ENCODE measurements at regions of chr22 and their contacts with region 1.

Region 1: GRCh38 chr22:45309472-45310227 is at the start of gene FAM118A:
- DNase-seq: peak; percentile 98
- ATAC-seq: peak; percentile 86
- H3K4me3 Mint-ChIP-seq: peak within 1 kb of the TSS; percentile 80
- H3K27ac Mint-ChIP-seq: peak within 1 kb of the TSS; percentile 97
- H3K4me1 Mint-ChIP-seq: peaks cover 46% of the 10 kb centered on the region
- H3K27me3 Mint-ChIP-seq: no peaks in the 10 kb centered on the region
- total RNA-seq, gene FAM118A: 25.5 to 29.0 TPM

Region 2: DNA sequence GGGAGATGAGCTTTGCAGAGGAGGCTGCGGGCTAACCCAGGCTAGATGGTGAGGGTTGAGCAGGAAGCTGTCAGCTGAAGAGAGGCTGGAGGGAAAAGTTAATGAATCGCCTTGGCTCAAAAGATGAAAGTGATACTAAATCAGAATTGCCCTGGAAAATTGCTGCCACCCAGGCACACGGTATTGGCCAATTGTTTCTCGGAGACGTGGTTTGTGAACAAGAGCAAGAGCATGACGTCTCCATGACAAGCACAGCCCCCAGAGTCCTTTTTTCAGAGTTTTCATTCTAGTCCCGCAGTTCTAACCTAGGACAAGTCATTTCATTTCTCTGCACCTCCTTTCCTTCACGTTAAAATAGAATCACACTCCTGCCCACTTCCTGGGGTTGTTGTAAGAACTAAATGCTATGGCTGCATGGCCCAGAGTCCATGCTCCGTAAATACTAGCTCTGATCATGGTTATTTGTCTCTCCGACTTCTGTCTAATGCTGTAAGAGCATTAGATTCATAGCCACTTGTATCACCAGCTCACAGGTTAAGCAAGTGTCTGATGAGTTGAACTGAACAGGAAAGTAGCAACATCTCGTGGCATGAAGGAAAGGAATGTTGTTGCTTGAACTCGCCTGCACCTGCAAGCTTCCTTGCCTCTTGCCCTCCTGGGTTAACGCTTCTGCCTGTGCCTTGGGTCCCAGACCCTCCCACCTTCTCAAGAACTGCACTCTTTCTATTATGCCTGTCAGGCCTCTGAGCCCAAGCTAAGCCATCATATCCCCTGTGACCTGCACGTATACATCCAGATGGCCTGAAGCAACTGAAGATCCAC is 179.7 kb before region 1 on chr22:
- CTCF ChIA-PET with region 1: no interaction called
- POLR2A ChIA-PET with region 1: interaction called, 3 read pairs
- intact Hi-C with region 1: loop called in 1 of 2 experiments (anchors 1 kb)
- DNase-seq: peak; percentile 75
- ATAC-seq: peak; percentile 93
- H3K4me3 Mint-ChIP-seq: peak overlapping the region; percentile 11
- H3K27ac Mint-ChIP-seq: peak overlapping the region; percentile 89
- H3K4me1 Mint-ChIP-seq: peaks cover 28% of the 10 kb centered on the region
- H3K27me3 Mint-ChIP-seq: no peaks in the 10 kb centered on the region

Region 3: DNA sequence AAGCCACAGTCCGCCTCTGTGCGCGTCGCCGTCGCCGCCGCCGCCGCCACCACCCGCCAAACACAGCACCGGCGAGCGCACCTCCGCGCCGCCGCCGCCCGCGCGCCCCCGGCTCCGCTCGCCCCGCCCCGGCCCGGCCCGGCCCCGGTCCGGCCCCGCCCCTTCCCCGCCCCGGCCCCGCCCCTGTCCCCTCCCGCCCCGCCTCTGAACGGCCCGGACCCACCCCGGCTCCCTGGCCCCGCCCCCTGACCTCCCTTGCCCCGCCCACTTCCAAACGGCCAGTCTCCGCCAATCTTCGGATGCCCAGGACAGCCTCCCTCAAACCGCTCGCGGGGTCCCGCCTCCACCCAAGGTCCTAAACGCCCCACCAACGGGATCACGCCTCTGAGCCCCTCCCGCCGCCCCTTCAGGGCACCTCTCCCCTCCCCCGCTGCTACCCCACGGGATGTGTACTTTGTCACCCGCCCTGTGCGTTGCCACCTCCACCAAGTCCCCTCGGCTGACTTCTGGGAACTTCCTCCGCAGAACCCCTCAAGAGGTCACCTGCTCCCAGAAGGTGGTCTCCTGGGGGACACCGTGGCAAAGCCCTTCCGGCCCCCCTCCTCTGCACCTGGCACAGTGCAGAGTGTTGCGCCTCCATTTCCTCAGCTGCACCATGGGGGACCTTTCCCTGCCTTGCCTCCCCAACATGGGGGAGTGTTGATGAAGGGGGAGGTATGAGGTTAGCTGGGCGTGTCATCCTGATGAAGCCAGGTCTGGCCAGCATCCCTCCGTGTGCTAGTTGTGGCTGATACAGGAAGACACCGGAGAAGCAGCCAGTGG is 68.6 kb before region 1 on chr22 and contains the start of gene KIAA0930:
- CTCF ChIA-PET with region 1: no interaction called
- POLR2A ChIA-PET with region 1: no interaction called
- intact Hi-C with region 1: loop called in 1 of 2 experiments (anchors 1 kb)
- DNase-seq: peak; percentile 91
- ATAC-seq: peak; percentile 69
- H3K4me3 Mint-ChIP-seq: peak within 1 kb of the TSS; percentile 89
- H3K27ac Mint-ChIP-seq: peak within 1 kb of the TSS; percentile 78
- H3K4me1 Mint-ChIP-seq: peaks cover 10% of the 10 kb centered on the region
- H3K27me3 Mint-ChIP-seq: no peaks in the 10 kb centered on the region
- total RNA-seq, gene KIAA0930: 24.8 to 29.6 TPM

Region 4: GRCh38 chr22:45284705-45285262 is 24.9 kb before region 1 on chr22 and contains the start of gene UPK3A:
- CTCF ChIA-PET with region 1: no interaction called
- POLR2A ChIA-PET with region 1: no interaction called
- intact Hi-C with region 1: loop called in 1 of 2 experiments (anchors 1 kb)
- DNase-seq: peak; percentile 80
- ATAC-seq: peak; percentile 97
- H3K4me3 Mint-ChIP-seq: no peak within 1 kb of the TSS
- H3K27ac Mint-ChIP-seq: no peak within 1 kb of the TSS
- H3K4me1 Mint-ChIP-seq: peaks cover 20% of the 10 kb centered on the region
- H3K27me3 Mint-ChIP-seq: peaks cover 8% of the 10 kb centered on the region
- total RNA-seq, gene UPK3A: not detected

Region 5: DNA sequence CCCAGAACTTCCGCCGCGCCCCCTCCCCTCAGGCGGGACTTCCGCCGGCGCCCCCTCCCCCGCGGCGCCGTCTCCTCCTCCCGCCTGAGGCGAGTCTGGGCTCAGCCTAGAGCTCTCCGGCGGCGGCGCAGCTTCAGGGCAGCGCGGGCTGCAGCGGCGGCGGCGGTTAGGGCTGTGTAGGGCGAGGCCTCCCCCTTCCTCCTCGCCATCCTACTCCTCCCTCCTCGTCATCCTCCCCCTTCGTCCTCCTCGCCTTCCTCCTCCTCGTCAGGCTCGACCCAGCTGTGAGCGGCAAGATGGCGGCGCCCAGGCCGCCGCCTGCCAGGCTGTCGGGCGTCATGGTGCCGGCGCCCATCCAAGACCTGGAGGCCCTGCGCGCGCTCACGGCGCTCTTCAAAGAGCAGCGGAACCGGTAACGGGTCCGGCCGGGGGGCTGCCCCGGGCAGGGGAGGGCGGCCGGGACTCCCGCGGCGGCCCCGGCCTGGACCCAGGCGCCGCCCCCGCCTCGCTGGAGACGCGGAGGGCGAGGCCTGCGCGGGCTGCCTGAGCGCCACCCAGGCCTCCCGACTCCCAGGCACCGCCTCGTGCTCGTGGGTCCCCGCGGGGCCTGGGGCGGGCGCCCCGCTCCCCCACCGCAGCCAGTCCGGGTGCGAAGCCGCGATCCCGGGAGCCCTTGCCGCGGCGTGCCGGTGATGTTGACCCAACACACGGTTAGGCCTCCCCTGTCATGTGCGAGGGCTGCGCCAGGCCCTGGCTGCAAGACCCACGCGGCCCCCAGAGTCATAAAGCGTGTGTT is 362.3 kb after region 1 on chr22 and contains the start of gene ATXN10:
- CTCF ChIA-PET with region 1: no interaction called
- POLR2A ChIA-PET with region 1: no interaction called
- intact Hi-C with region 1: loop called in 1 of 2 experiments (anchors 10 kb)
- DNase-seq: peak; percentile 83
- ATAC-seq: peak; percentile 78
- H3K4me3 Mint-ChIP-seq: peak within 1 kb of the TSS; percentile 89
- H3K27ac Mint-ChIP-seq: peak within 1 kb of the TSS; percentile 87
- H3K4me1 Mint-ChIP-seq: peaks cover 33% of the 10 kb centered on the region
- H3K27me3 Mint-ChIP-seq: peaks cover 3% of the 10 kb centered on the region
- total RNA-seq, gene ATXN10: 87.1 to 101 TPM